SK-N-SH (cell line): ENCODE measurements at regions of chr2 and their contacts with region 1.

Region 1: GRCh38 chr2:102630458-102630857 is 11.1 kb downstream of the SLC9A2 start:
- DNase-seq: no peak
- H3K4me3 ChIP-seq: no peak overlapping the region
- H3K27ac ChIP-seq: no peak overlapping the region
- H3K4me1 ChIP-seq: no peaks in the 10 kb centered on the region
- H3K27me3 ChIP-seq: no peaks in the 10 kb centered on the region; the same call in 1 of the 2 replicates
- CTCF ChIP-seq: no peak
- EP300 ChIP-seq: no peak
- RAD21 ChIP-seq: no peak

Region 2: DNA sequence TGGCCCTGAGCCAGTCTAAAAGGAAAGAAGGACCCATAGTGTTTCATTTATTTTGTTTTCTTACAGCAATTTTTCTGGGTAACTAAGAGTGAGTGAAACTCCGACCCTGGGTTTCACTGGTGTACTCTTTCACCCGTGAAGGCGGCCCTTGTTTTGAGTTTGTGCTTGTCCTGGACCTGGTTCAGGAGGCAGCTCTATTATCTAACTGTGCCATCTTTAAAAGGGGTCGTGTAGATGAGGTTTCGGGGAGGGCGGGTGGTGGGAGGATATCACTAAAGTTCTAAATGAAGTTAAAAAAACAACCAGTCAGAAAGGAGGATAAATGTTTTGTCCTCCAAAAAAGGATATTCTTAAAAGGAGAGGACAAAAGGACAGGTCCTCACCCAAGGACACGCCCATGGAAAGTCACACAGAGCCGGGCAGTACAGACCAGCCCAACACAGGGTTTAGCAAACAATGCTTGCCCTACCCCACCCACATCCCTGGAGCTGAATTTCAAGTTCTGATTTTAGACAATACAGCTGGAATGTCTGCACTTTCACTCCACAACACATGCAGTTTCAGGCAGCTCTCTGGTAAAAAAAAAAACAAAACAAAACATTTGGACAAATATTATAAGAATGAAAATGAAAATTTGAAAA is 89.7 kb before region 1 on chr2:
- CTCF ChIA-PET with region 1: no interaction called
- POLR2A ChIA-PET with region 1: no interaction called
- DNase-seq: no peak
- H3K4me3 ChIP-seq: no peak overlapping the region
- H3K27ac ChIP-seq: no peak overlapping the region
- H3K4me1 ChIP-seq: no peaks in the 10 kb centered on the region
- H3K27me3 ChIP-seq: peaks cover 28% of the 10 kb centered on the region
- CTCF ChIP-seq: no peak
- EP300 ChIP-seq: no peak
- RAD21 ChIP-seq: no peak

Region 3: GRCh38 chr2:102615622-102616436 is 14.6 kb before region 1 on chr2:
- CTCF ChIA-PET with region 1: interaction called, 11 read pairs
- POLR2A ChIA-PET with region 1: no interaction called
- DNase-seq: peak; percentile 69
- H3K4me3 ChIP-seq: no peak overlapping the region
- H3K27ac ChIP-seq: no peak overlapping the region
- H3K4me1 ChIP-seq: no peaks in the 10 kb centered on the region
- H3K27me3 ChIP-seq: peaks cover 44% of the 10 kb centered on the region
- CTCF ChIP-seq: peak; percentile 92
- EP300 ChIP-seq: no peak
- RAD21 ChIP-seq: peak; percentile 76

Region 4: GRCh38 chr2:102664471-102664909 is 34.0 kb after region 1 on chr2:
- CTCF ChIA-PET with region 1: no interaction called
- POLR2A ChIA-PET with region 1: no interaction called
- DNase-seq: no peak
- H3K4me3 ChIP-seq: no peak overlapping the region
- H3K27ac ChIP-seq: no peak overlapping the region
- H3K4me1 ChIP-seq: no peaks in the 10 kb centered on the region
- H3K27me3 ChIP-seq: peaks cover 20% of the 10 kb centered on the region; the same call in 1 of the 2 replicates
- CTCF ChIP-seq: no peak
- EP300 ChIP-seq: no peak
- RAD21 ChIP-seq: no peak

Region 5: GRCh38 chr2:102690012-102690411 is 59.6 kb after region 1 on chr2:
- CTCF ChIA-PET with region 1: no interaction called
- POLR2A ChIA-PET with region 1: no interaction called
- DNase-seq: no peak
- H3K4me3 ChIP-seq: no peak overlapping the region
- H3K27ac ChIP-seq: no peak overlapping the region
- H3K4me1 ChIP-seq: no peaks in the 10 kb centered on the region
- H3K27me3 ChIP-seq: peaks cover 44% of the 10 kb centered on the region; the same call in 1 of the 2 replicates
- CTCF ChIP-seq: no peak
- EP300 ChIP-seq: no peak
- RAD21 ChIP-seq: no peak